ENCODE measurements at regions of chr2 and their contacts with region 1.

Region 1: DNA sequence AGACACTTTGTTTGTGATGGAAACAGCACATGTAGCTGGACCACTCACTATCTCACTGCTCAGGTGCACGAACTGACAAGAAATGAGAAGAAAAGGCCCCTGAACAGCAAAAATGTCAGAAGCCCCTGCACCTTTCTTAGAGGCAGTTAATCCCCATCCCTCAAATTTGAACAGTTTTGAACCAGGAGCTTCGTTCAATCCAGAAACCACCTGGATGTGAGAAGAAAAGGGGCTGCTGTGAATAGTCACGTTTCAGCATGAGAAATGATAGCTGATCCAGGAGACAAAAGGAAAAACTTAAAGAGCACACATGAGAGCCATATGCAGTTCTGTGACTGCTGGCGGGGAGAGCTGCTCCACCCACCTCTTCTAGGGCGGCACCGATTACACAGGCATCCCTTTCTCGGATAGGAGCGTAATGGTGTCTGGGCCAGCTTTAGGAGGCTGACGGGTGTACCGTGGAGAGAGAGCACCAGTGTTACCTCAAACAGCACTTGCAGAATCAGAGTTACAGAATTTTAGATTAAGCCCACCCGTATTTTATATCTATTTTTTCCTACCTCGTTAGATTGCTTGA is 117.0 kb upstream of the EML6 start:
- DNase-seq: peak; percentile 82
- H3K4me3 Mint-ChIP-seq: peak overlapping the region; percentile 69
- H3K27ac Mint-ChIP-seq: peak overlapping the region; percentile 84
- H3K4me1 Mint-ChIP-seq: peaks cover 77% of the 10 kb centered on the region
- H3K27me3 Mint-ChIP-seq: no peaks in the 10 kb centered on the region

Region 2: GRCh38 chr2:53970724-53971602 is 635.5 kb before region 1 on chr2 and contains the start of gene PSME4:
- intact Hi-C with region 1: no loop called
- DNase-seq: peak; percentile 98
- H3K4me3 Mint-ChIP-seq: peak within 1 kb of the TSS; percentile 93
- H3K27ac Mint-ChIP-seq: peak within 1 kb of the TSS; percentile 97
- H3K4me1 Mint-ChIP-seq: peaks cover 28% of the 10 kb centered on the region
- H3K27me3 Mint-ChIP-seq: no peaks in the 10 kb centered on the region
- total RNA-seq, gene PSME4: 49.6 and 52.1 TPM in 2 replicates

Region 3: GRCh38 chr2:54073797-54074196 is 532.7 kb before region 1 on chr2:
- intact Hi-C with region 1: no loop called
- DNase-seq: peak; percentile 62
- H3K4me3 Mint-ChIP-seq: no peak overlapping the region
- H3K27ac Mint-ChIP-seq: no peak overlapping the region
- H3K4me1 Mint-ChIP-seq: peaks cover 7% of the 10 kb centered on the region
- H3K27me3 Mint-ChIP-seq: no peaks in the 10 kb centered on the region

Region 4: DNA sequence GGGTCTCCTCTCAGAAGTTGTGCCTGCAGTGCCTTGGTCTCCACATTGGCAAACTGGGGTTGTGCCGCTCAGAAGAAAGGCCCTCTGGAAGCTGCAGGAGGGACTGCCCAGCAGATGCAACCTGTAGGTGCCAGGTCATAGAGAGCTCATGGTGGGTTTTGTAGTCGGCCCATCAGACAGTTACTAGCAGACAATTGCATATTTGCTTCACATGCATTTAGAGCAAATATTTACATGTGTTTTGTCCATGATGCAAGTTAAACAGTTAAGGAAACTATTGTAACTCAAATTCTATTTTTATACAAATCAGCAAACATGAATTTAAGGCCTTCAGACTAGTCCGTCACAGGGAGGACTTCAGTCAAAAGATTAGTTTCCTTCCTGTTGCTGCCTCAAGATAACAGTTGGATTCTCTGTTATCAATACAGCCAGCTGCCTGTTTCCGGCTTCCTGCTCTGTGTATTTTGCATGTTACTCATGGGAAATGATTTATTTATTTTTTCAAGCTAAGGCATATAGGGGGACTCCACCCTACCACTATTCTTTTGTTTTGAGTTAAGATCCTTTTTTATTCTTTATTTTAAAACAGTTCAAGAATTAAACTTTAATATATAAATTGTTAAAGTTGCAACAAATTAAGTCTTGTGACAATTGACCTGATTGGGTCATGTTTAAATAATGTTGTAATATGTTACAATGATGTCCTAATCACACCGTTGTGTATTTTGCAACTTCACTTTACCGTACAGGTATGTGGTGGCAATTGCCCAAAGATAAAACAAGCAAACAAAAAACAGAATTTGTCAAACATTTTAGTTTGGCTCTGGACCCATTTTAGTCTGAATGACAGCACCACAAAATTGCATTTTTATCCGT is 16.9 kb before region 1 on chr2:
- intact Hi-C with region 1: loop called (anchors 1 kb)
- DNase-seq: peak; percentile 83
- H3K4me3 Mint-ChIP-seq: peak overlapping the region; percentile 67
- H3K27ac Mint-ChIP-seq: peak overlapping the region; percentile 85
- H3K4me1 Mint-ChIP-seq: peaks cover 66% of the 10 kb centered on the region
- H3K27me3 Mint-ChIP-seq: no peaks in the 10 kb centered on the region

Region 5: GRCh38 chr2:54624591-54625071 is 18.1 kb after region 1 on chr2:
- intact Hi-C with region 1: loop called (anchors 2 kb)
- DNase-seq: no peak
- H3K4me3 Mint-ChIP-seq: no peak overlapping the region
- H3K27ac Mint-ChIP-seq: peak overlapping the region; percentile 0
- H3K4me1 Mint-ChIP-seq: peaks cover 3% of the 10 kb centered on the region
- H3K27me3 Mint-ChIP-seq: no peaks in the 10 kb centered on the region

Measured in activated CD4-positive, alpha-beta T cell treated with anti-CD3 and anti-CD28 coated beads, Interleukin-2, amount 10 ng/mL, durations not matched to agents 24 days and 14 days (primary cell).